ENCODE measurements at regions of chr10 and their contacts with region 1.

Region 1: GRCh38 chr10:123994417-123995081 is 98.8 kb downstream of the CHST15 start:
- DNase-seq: peak; percentile 87
- ATAC-seq: peak; percentile 82 to 89 (median 88)
- H3K4me3 ChIP-seq: peak overlapping the region in 1 of 3 donors; percentile 10
- H3K27ac ChIP-seq: no peak overlapping the region
- H3K4me1 ChIP-seq: peaks cover 0 to 13% (median 0%) of the 10 kb centered on the region in 4 donors
- H3K27me3 ChIP-seq: peaks cover 0 to 11% of the 10 kb centered on the region in 2 donors
- CTCF ChIP-seq: peak; percentile 98 to 99 (median 98)
- POLR2A ChIP-seq: no peak

Region 2: DNA sequence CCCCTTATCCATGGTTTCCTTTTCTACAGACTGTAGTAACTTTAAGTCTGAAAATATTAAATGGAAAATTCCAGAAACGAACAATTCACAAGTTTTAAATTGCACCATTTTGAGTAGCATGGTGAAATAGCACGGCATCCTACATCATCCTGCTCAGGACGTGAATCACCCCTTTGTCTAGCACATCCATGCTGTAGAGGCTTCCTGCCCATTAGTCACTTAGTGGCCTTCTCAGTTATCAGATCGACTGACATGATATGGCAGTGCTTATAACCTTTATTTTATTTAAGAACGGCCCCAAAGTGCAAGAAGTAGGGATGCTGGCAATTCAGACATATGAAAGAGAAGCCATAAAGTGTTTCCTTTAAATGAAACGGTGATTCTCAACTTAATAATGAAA is 185.6 kb before region 1 on chr10:
- intact Hi-C with region 1: no loop called
- DNase-seq: no peak
- ATAC-seq: peak in 1 of 4 donors; percentile 36
- H3K4me3 ChIP-seq: no peak overlapping the region
- H3K27ac ChIP-seq: no peak overlapping the region
- H3K4me1 ChIP-seq: no peaks in the 10 kb centered on the region
- H3K27me3 ChIP-seq: no peaks in the 10 kb centered on the region
- CTCF ChIP-seq: no peak
- POLR2A ChIP-seq: no peak

Region 3: DNA sequence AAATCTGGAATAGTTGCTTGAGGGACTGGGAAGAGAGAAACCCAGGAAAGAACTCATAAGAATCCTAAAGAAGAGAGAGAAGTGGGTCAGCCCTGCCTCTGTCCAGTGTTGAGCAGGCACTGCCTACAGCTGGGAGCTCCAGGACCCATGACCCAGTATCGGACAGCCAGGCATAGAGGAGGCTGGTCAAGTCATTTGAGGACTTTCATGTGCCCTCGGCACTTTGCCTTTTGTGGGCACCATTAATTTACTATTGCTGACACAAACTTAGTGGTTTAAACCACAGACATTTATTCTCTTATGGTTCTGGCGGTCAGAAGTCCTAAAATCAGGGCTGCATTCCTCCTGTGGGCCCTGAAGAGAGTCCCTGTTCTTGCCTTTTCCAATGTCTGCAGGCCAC is 163.3 kb before region 1 on chr10:
- intact Hi-C with region 1: no loop called
- DNase-seq: no peak
- ATAC-seq: no peak
- H3K4me3 ChIP-seq: no peak overlapping the region
- H3K27ac ChIP-seq: no peak overlapping the region
- H3K4me1 ChIP-seq: no peaks in the 10 kb centered on the region
- H3K27me3 ChIP-seq: no peaks in the 10 kb centered on the region
- CTCF ChIP-seq: no peak
- POLR2A ChIP-seq: no peak

Region 4: DNA sequence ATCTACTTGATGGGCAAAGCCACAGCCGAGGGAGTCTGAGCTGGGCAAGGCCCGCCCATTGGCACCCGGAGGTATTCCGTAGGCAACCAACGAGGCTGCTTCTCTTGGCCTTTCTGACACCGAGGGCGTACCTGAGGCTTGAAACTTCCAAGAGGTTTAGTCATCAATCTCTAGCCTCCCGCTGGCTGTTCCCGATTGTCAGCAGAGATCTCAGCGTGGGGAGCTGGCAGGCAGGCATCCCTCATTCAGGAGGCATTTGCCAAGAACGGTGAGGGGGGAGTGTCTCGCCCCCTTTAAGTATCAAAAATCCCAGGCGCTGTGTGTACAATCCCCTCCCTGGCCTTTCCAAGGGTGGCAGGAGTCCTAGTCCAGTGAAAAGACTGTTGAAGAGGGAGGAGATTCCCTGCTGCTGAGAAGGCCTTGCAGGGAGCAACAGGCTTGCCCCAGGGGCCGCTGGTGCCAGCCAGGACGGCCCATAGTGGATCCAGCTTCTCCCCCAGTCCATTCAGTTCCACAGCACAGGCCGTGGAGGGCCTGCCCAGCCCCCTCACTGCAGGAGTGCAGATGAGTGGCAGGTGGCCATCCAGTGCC is 384.4 kb after region 1 on chr10:
- intact Hi-C with region 1: loop called in 1 of 2 experiments (anchors 5 kb)
- DNase-seq: no peak
- ATAC-seq: no peak
- H3K4me3 ChIP-seq: no peak overlapping the region
- H3K27ac ChIP-seq: no peak overlapping the region
- H3K4me1 ChIP-seq: no peaks in the 10 kb centered on the region
- H3K27me3 ChIP-seq: no peaks in the 10 kb centered on the region
- CTCF ChIP-seq: no peak
- POLR2A ChIP-seq: no peak

Region 5: DNA sequence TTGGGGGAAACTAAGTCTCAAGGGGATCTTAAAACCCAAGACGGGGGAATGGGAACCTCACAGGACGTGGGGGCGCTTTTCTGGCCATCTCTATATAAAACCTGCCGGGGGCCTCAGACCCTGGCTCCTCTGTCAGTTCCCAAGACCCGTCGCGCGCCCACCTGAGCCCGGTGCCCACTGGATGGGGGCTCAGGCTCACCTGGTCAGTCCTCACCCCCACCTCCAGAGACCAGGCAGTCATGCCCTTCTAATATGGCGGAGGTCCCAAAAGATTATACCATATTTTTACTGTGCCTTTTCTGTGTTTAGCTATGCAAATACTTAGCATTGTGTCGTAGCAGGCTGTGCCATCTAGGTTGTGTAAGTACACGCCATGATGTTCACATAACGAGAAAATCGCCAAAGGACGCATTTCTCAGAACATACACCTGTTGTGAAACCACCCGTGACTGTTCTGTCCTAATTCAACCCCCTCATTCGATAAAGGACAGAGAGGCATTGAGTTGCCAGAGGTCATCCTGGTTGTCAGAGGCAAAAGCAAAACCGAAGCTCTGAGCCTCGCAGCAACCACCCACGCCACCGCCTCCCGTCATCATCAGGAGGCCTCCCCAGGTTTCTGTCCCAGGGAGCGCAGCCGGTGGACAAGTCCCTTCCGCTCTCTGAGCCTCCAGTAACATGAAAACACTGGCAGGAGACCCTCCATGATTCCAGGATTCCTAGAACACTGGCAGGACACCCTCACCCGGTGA is 395.2 kb after region 1 on chr10:
- intact Hi-C with region 1: loop called in 1 of 2 experiments (anchors 5 kb)
- DNase-seq: peak in 2 of 3 donors; percentile 70 to 73
- ATAC-seq: peak; percentile 50 to 81 (median 64)
- H3K4me3 ChIP-seq: peak overlapping the region; percentile 31 to 50 (median 44)
- H3K27ac ChIP-seq: peak overlapping the region; percentile 23 to 58 (median 48)
- H3K4me1 ChIP-seq: peaks cover 0 to 11% (median 0%) of the 10 kb centered on the region in 4 donors
- H3K27me3 ChIP-seq: no peaks in the 10 kb centered on the region
- CTCF ChIP-seq: no peak
- POLR2A ChIP-seq: peak; percentile 8